ENCODE measurements at regions of chr1 and their contacts with region 1.

Region 1: DNA sequence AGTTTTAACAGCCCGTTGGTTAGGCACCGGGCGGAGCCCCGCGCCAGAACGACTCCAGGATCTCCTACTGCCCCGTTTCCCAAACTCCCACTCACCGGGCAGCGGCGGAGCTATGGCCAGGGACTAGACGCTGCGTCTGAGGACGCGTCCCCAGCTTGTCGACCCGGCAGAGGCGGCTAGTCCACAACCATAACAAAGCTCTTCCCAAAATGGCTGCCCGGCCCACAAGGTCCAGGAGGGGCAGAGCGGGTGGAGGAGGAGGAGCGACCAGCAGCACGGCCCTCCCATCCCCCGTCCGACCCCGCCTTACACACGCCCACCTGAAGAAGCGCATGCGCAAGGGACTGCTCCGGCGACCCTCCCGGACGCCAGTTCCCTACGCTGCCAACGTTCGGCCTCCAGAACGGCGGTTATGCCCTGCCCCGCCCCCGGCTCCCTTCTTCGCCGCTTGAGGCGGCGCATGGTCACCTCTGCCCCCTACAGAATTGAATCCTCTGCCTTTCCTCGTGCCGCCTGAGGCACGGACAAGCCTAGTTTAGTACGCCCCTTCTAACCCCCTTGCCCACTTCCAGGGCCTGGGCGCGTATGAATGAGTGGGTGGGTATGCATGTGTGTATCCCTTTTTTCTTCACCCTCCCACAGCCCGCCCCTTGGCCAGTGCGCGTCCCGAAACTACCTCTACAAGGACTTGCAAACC is at the start of gene GPBP1L1:
- DNase-seq: peak; percentile 98 to 99
- ATAC-seq: peak; percentile 97
- H3K4me3 ChIP-seq: peak within 1 kb of the TSS; percentile 93 to 98
- H3K27ac ChIP-seq: peak within 1 kb of the TSS; percentile 99 to 100
- H3K4me1 ChIP-seq: peaks cover 2 to 5% of the 10 kb centered on the region in 2 donors
- H3K27me3 ChIP-seq: no peaks in the 10 kb centered on the region
- total RNA-seq, gene GPBP1L1: 104 to 113 TPM

Region 2: DNA sequence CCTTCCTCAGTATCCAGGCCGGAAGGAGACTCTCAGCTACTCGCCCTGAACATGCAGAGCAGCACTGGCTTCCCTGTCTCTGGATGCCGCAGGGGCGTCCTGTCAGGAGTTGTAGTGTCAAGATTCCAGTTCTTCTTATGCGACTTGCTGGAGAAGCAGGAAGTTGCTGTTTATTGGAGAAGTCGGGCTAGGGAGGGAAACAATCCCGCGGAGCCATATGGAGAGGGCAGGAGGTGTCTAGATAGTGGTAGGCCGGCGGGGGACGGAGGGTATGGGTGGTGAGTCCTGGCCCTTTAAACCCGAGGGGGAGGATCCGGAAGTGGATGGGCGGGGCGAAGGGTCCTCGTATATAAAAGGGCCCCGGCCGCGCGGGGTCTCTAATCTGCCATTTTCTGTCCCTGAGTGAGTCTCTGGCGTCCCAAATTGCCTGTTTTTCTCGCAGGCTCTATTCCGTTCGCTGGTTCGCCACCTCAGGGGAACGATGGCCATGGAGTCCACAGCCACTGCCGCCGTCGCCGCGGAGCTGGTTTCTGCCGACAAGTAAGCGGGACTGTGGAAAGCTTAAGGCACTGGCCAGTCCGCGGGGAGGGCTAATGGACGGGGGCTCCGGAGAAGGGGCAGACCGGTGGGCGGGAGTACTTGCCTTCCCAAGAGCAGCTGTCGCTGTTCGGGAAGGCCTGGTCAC is 102.7 kb before region 1 on chr1 and contains the start of gene NASP:
- intact Hi-C with region 1: loop called in 1 of 2 experiments (anchors 1 kb)
- DNase-seq: peak; percentile 92 to 97
- ATAC-seq: peak; percentile 96
- H3K4me3 ChIP-seq: peak within 1 kb of the TSS; percentile 76 to 92
- H3K27ac ChIP-seq: peak within 1 kb of the TSS; percentile 14 to 96
- H3K4me1 ChIP-seq: no peaks in the 10 kb centered on the region
- H3K27me3 ChIP-seq: no peaks in the 10 kb centered on the region
- total RNA-seq, gene NASP: 59.1 to 63.3 TPM

Region 3: GRCh38 chr1:45750298-45751038 is 64.0 kb after region 1 on chr1 and contains the start of gene IPP:
- intact Hi-C with region 1: loop called in 1 of 2 experiments (anchors 2 kb)
- DNase-seq: peak; percentile 99
- ATAC-seq: peak; percentile 100
- H3K4me3 ChIP-seq: peak within 1 kb of the TSS; percentile 56 to 74
- H3K27ac ChIP-seq: peak within 1 kb of the TSS; percentile 73 to 96
- H3K4me1 ChIP-seq: no peaks in the 10 kb centered on the region
- H3K27me3 ChIP-seq: no peaks in the 10 kb centered on the region
- total RNA-seq, gene IPP: 8.4 to 14.2 TPM

Region 4: DNA sequence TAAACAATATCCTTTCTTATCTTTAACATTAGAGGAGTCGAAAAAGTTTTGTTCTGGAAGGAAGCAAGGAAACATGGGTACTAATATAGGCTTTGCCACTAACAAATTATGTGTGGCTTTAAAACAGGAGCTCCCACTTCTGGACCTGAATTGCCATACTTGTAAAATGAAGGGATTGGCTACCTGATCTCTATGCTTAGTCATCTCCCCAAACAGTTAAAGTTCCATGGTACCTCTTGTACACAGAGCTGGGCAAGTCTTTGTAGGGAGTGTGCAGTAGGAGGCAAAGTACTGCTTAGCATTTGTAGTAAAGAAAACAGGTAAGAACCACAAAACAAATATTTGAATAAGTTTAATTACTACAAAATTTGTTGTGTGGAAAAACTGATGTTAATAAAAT is 198.2 kb after region 1 on chr1:
- intact Hi-C with region 1: loop called (anchors 5 to 10 kb)
- DNase-seq: no peak
- ATAC-seq: no peak
- H3K4me3 ChIP-seq: no peak overlapping the region
- H3K27ac ChIP-seq: no peak overlapping the region
- H3K4me1 ChIP-seq: no peaks in the 10 kb centered on the region
- H3K27me3 ChIP-seq: no peaks in the 10 kb centered on the region